ENCODE measurements at regions of chr11 and their contacts with region 1.

Region 1: GRCh38 chr11:3021125-3021524 is 29.0 kb upstream of the NAP1L4 start:
- DNase-seq: peak; percentile 54
- H3K4me3 ChIP-seq: no peak overlapping the region
- H3K27ac ChIP-seq: no peak overlapping the region
- H3K4me1 ChIP-seq: peaks cover 20% of the 10 kb centered on the region
- H3K27me3 ChIP-seq: no peaks in the 10 kb centered on the region
- CTCF ChIP-seq: peak; percentile 70 to 87

Region 2: DNA sequence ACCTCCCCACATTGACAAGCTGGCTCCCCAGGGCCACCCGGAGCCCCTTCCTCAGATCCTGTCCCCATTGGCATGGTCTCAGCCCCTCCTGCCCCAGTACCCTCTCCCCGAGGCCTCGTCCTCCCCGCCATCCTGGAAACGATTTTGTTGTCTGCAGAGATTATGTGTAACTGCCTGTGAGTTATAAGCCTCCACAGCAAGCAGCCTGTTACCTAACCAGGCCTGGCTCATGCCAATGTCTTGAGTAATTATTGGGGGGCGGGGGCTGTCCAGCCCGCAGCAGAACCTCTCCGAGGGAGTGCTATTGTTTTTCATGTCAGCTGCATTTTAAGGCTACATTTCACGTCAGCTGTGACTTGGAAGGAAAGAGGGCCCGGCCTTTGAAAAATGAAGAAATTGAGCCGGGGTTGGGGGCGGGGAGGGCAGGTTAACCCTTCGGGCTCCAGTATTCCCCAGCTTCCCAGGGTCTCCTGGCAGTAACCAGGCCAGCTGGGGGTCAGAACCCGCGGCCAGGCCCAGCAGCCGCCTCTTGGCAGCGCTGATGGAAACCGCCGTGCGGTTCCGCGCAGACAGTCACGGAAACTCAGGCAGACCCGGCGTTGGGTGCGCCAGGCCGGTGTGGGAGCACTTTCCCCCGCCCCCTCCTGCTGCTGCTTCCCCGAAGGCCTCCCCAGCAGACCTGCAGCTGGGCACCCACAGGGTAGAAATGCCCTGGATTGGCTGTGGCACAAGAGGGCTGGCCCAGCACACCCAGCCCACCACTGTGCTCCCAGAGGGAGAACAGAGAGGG is 195.0 kb before region 1 on chr11:
- CTCF ChIA-PET with region 1: no interaction called
- dilution Hi-C with region 1: no loop called
- in situ Hi-C with region 1: no loop called
- intact Hi-C with region 1: no loop called
- DNase-seq: peak; percentile 89
- H3K4me3 ChIP-seq: peak overlapping the region in 2 of 3 experiments; percentile 17 to 28
- H3K27ac ChIP-seq: peak overlapping the region; percentile 63
- H3K4me1 ChIP-seq: peaks cover 21% of the 10 kb centered on the region
- H3K27me3 ChIP-seq: no peaks in the 10 kb centered on the region
- CTCF ChIP-seq: no peak

Region 3: GRCh38 chr11:2975594-2975993 is 45.5 kb before region 1 on chr11:
- CTCF ChIA-PET with region 1: interaction called, 7 read pairs
- dilution Hi-C with region 1: no loop called
- in situ Hi-C with region 1: no loop called
- intact Hi-C with region 1: loop called (anchors 1 kb)
- DNase-seq: no peak
- H3K4me3 ChIP-seq: no peak overlapping the region
- H3K27ac ChIP-seq: no peak overlapping the region
- H3K4me1 ChIP-seq: peaks cover 6% of the 10 kb centered on the region
- H3K27me3 ChIP-seq: no peaks in the 10 kb centered on the region
- CTCF ChIP-seq: peak; percentile 49 to 64

Region 4: GRCh38 chr11:2992234-2992996 is 28.7 kb before region 1 on chr11 and contains the start of gene NAP1L4:
- CTCF ChIA-PET with region 1: interaction called, 5 read pairs
- dilution Hi-C with region 1: no loop called
- in situ Hi-C with region 1: no loop called
- intact Hi-C with region 1: loop called (anchors 2 kb)
- DNase-seq: peak; percentile 95
- H3K4me3 ChIP-seq: peak within 1 kb of the TSS; percentile 67 to 80 (median 80)
- H3K27ac ChIP-seq: peak within 1 kb of the TSS; percentile 86
- H3K4me1 ChIP-seq: peaks cover 32% of the 10 kb centered on the region
- H3K27me3 ChIP-seq: no peaks in the 10 kb centered on the region
- CTCF ChIP-seq: no peak
- total RNA-seq, gene NAP1L4: 89.2 to 153 TPM

Region 5: GRCh38 chr11:3000082-3000961 is 20.8 kb before region 1 on chr11:
- CTCF ChIA-PET with region 1: no interaction called
- dilution Hi-C with region 1: no loop called
- in situ Hi-C with region 1: no loop called
- intact Hi-C with region 1: loop called (anchors 2 kb)
- DNase-seq: peak; percentile 96
- H3K4me3 ChIP-seq: no peak overlapping the region
- H3K27ac ChIP-seq: peak overlapping the region; percentile 63
- H3K4me1 ChIP-seq: peaks cover 63% of the 10 kb centered on the region
- H3K27me3 ChIP-seq: no peaks in the 10 kb centered on the region
- CTCF ChIP-seq: no peak